ENCODE measurements at regions of chr5 and their contacts with region 1.

Region 1: GRCh38 chr5:80083101-80083890 is 48.1 kb downstream of the THBS4 start:
- DNase-seq: no peak
- H3K4me3 ChIP-seq: peak overlapping the region; percentile 26
- CTCF ChIP-seq: peak; percentile 59

Region 2: DNA sequence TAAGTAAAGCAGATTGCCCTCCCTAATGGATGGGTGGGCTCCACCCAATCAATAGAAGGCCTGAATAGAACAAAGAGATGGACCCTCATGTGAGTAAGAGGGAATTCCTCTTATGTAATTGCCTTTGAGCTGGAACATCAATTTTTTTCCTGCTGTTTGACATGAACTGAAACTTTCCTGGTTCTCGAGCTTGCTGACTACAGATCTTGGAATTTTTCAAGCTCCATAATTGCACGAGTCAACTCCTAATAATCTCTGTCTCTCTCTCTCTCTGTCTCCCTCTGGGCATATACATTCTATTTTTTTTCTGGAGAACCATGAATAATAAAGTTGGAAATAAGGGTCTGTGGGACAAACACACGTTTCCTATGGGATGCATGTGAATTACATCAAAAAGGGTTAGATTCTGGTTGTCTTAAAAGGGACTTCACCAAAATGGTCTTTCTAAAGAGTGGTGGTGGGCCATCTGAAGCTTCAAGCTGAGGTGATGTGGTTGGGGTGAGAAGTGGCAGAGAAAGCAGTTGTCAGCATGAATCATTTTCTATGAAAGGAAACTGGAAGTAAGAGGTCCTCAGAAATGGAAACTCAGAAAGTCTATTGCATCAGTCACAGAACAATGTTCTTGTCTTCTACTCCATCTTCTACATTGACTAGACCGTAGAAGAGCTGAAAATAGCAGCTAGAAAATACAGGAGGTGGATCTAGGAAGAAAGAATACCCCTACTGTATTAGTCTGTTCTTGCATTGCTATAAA is 522.3 kb before region 1 on chr5:
- CTCF ChIA-PET with region 1: interaction called, 13 read pairs
- POLR2A ChIA-PET with region 1: no interaction called
- DNase-seq: peak; percentile 53
- H3K4me3 ChIP-seq: no peak overlapping the region
- CTCF ChIP-seq: no peak

Region 3: GRCh38 chr5:79702606-79703382 is 380.5 kb before region 1 on chr5:
- CTCF ChIA-PET with region 1: interaction called, 16 read pairs
- POLR2A ChIA-PET with region 1: no interaction called
- DNase-seq: no peak
- H3K4me3 ChIP-seq: no peak overlapping the region
- CTCF ChIP-seq: peak; percentile 45

Region 4: GRCh38 chr5:79878721-79879336 is 204.5 kb before region 1 on chr5:
- CTCF ChIA-PET with region 1: interaction called, 16 read pairs
- POLR2A ChIA-PET with region 1: no interaction called
- DNase-seq: no peak
- H3K4me3 ChIP-seq: no peak overlapping the region
- CTCF ChIP-seq: no peak

Region 5: DNA sequence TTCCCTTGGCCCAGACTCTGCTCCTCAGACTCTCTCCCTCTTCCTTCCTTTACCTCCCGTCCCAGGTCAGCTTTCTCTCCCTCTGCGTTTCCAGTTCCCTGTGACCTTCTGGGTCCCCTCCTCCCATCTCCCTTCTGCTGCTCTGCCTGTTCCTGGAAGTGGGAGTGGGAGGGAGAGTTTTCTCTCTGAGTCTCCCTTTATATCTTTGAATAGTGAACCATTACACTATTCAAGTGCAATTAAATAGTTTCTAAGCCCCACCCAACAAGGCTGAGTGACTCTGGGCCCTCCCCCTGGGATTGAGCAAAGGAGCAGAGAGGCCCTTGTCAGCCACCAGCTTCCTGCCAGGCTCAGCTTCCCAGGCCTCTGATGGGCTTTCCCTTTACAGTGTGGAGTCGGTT is 13.4 kb before region 1 on chr5:
- CTCF ChIA-PET with region 1: interaction called, 57 read pairs
- POLR2A ChIA-PET with region 1: no interaction called
- DNase-seq: no peak
- H3K4me3 ChIP-seq: no peak overlapping the region
- CTCF ChIP-seq: no peak

Region 6: DNA sequence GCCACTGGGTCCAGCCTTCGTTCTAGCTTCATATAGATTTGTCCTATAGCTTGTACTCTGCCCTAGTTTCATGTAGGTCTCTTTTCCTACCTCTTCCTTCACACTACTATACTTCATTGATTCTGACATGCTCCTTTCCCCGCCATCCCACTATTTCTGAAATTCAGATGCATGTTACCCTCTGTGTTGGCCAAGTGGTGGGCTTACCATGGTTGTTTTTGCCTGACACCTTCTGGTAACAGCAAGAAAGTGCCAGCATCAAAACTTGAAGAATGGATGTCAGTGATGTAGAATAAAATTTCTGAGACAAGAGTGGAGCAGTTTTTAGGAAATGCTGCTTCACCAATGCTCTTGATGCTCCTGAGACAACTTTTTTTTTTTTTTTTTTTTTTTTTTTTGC is 192.1 kb after region 1 on chr5:
- CTCF ChIA-PET with region 1: interaction called, 11 read pairs
- POLR2A ChIA-PET with region 1: no interaction called
- DNase-seq: no peak
- H3K4me3 ChIP-seq: no peak overlapping the region
- CTCF ChIP-seq: peak; percentile 50